SK-N-SH (cell line): ENCODE measurements at regions of chr1 and their contacts with region 1.

Region 1: DNA sequence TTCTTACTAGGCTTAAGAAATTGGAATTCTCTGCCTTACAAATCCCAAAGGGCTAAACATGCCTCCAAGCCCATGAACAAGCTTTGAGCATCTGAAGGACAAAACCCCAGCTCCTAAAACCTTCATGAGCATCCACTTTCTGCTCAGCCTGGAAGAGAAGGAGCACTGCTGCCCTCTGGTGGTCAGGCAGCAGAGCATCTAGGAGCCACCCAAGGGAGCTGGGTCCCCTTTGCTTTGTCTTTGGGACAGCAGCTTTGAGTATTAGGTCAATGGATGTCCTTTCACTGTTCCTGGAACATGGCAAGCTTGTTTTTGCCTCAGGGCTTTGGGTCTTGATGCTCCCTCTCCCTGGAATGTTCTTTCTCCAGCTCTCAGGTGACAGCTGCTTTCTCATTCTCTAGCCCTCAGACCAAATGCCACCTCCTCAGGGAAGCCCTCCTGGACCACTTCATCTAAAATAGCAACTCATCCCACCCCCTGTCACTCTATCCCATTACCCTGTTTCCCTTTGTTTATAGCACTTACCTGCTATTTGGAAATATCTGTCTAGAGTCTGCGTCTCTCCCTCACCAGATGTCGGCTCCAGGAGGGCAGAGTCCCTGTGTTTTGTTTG is 25.7 kb downstream of the RAB7B start:
- DNase-seq: peak; percentile 82
- H3K4me3 ChIP-seq: peak overlapping the region in 1 of 2 experiments; percentile 22; a peak in 1 of 4 replicates
- H3K27ac ChIP-seq: no peak overlapping the region
- H3K4me1 ChIP-seq: peaks cover 0 to 12% of the 10 kb centered on the region in 2 experiments; a peak in 1 of 4 replicates
- H3K27me3 ChIP-seq: no peaks in the 10 kb centered on the region
- CTCF ChIP-seq: peak; percentile 97
- EP300 ChIP-seq: no peak
- RAD21 ChIP-seq: peak; percentile 96

Region 2: DNA sequence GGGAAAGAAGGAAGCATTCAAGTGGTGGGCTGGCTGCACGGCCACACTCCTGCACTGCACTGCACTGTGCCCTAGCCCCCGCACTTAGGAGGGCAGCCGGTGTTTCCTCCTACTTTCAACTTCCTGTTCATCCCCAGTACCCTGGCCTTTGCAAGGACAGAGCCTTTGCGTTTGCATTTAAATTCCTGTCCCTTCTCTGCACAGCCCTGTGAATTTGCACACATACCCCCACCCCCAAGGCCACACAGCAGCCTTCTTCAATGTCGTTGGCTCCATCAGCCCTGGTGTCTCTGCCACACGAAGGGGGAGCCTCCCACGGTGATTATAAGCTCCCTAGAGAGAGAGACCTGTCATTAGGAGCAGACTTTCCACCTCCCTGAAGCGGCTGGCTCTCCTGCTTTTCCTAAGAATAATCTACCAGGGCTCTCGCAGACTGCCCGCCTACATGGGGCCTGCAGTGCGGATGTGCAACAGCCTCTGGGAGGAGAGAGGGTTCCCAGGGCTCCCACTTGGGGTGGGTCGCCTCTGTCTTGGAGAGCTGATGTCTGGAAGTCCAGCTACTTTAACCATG is 284.0 kb before region 1 on chr1:
- CTCF ChIA-PET with region 1: no interaction called
- POLR2A ChIA-PET with region 1: no interaction called
- DNase-seq: no peak
- H3K4me3 ChIP-seq: no peak overlapping the region
- H3K27ac ChIP-seq: no peak overlapping the region
- H3K4me1 ChIP-seq: no peaks in the 10 kb centered on the region
- H3K27me3 ChIP-seq: no peaks in the 10 kb centered on the region
- CTCF ChIP-seq: no peak
- EP300 ChIP-seq: no peak
- RAD21 ChIP-seq: no peak

Region 3: DNA sequence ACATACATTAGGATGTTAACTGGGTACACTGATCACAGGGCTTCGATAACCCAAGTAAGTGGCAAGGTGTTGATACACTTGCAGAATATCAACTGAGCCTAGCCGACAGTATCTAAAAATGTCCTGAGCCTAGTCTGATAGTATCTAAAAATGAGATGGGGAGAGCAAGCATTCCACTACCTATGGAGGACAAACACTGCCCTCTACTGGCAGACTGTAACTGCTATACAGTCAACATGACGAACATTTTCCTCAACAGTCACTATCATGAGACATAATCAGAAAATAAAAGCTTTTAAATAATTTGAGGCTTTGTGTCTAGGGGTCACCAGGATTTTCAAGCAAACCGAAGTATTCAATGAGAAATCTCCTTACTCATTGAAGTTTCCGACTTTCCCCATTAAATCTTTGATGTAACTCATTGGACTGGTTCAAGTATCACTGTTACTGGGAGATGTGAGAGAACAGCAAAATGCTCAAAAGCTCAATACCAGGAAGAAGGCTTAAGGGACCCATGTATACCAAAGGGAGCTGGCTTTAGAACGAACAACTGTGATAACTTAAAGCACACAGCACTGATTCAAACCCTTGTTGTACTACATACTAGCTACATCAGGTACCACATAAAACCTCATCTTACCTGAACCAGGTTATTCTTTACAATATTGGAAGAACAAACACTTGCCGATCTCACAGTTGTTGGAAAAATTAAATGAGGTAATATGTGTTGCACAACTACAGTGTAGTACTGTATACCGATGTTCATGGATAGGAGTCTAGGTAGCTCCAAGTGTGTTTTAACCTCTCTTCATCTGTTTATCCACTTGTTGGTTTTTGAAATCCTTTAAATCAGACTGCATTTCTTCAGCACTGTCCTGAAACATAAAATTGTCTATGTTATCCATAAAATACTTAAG is 266.1 kb before region 1 on chr1:
- CTCF ChIA-PET with region 1: interaction called, 20 read pairs
- POLR2A ChIA-PET with region 1: no interaction called
- DNase-seq: peak; percentile 70
- H3K4me3 ChIP-seq: no peak overlapping the region; a peak in 1 of 4 replicates
- H3K27ac ChIP-seq: peak overlapping the region; percentile 53 to 55
- H3K4me1 ChIP-seq: no peaks in the 10 kb centered on the region; a peak in 1 of 4 replicates
- H3K27me3 ChIP-seq: no peaks in the 10 kb centered on the region
- CTCF ChIP-seq: peak; percentile 96
- EP300 ChIP-seq: no peak
- RAD21 ChIP-seq: peak; percentile 81

Region 4: DNA sequence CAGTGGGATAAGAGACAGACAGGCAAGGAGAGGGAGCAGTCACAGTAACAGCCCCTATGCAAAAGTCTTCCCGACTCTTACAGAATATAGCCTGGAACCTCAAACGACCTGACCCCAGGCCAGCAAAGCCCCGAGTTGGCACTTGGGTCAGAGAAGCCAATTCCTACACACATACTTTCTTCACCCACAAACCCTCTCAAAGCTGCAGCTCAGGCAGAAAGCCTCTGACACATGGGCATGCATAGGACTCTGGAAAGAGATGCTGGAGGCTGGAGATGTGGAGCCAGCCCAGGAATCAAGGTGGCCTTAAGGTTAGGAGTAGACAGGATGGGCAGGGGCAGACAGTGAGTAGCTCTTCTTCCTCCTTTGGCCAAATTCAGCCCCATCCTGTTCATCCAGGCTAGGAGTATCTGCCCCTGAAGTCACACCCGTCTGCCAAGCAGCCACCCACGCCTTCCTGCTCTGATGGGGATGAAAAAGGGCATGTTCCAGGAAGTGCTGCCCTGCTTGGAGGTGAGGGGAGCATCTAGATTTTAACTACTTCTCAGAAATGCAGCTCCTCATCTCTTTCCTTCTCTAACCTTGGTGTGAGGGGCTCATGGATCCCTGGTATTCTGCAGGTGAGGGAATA is 172.3 kb before region 1 on chr1:
- CTCF ChIA-PET with region 1: interaction called, 29 read pairs
- POLR2A ChIA-PET with region 1: no interaction called
- DNase-seq: no peak
- H3K4me3 ChIP-seq: no peak overlapping the region
- H3K27ac ChIP-seq: no peak overlapping the region
- H3K4me1 ChIP-seq: peaks cover 0 to 18% of the 10 kb centered on the region in 2 experiments; a peak in 1 of 4 replicates
- H3K27me3 ChIP-seq: no peaks in the 10 kb centered on the region
- CTCF ChIP-seq: no peak
- EP300 ChIP-seq: no peak
- RAD21 ChIP-seq: no peak

Region 5: GRCh38 chr1:205896320-205896719 is 81.2 kb before region 1 on chr1:
- CTCF ChIA-PET with region 1: interaction called, 10 read pairs
- POLR2A ChIA-PET with region 1: interaction called, 3 read pairs
- DNase-seq: no peak
- H3K4me3 ChIP-seq: no peak overlapping the region
- H3K27ac ChIP-seq: no peak overlapping the region
- H3K4me1 ChIP-seq: peaks cover 0 to 8% of the 10 kb centered on the region in 2 experiments; a peak in 2 of 4 replicates
- H3K27me3 ChIP-seq: no peaks in the 10 kb centered on the region
- CTCF ChIP-seq: no peak
- EP300 ChIP-seq: no peak
- RAD21 ChIP-seq: no peak

Region 6: GRCh38 chr1:205928317-205928716 is 49.2 kb before region 1 on chr1:
- CTCF ChIA-PET with region 1: interaction called, 271 read pairs
- POLR2A ChIA-PET with region 1: no interaction called
- DNase-seq: no peak
- H3K4me3 ChIP-seq: no peak overlapping the region
- H3K27ac ChIP-seq: no peak overlapping the region
- H3K4me1 ChIP-seq: peaks cover 0 to 3% of the 10 kb centered on the region in 2 experiments; a peak in 1 of 4 replicates
- H3K27me3 ChIP-seq: 0 out of 2 replicates have a peak, but pooled peaks cover 7% of the 10 kb centered on the region
- CTCF ChIP-seq: no peak
- EP300 ChIP-seq: no peak
- RAD21 ChIP-seq: no peak

Region 7: DNA sequence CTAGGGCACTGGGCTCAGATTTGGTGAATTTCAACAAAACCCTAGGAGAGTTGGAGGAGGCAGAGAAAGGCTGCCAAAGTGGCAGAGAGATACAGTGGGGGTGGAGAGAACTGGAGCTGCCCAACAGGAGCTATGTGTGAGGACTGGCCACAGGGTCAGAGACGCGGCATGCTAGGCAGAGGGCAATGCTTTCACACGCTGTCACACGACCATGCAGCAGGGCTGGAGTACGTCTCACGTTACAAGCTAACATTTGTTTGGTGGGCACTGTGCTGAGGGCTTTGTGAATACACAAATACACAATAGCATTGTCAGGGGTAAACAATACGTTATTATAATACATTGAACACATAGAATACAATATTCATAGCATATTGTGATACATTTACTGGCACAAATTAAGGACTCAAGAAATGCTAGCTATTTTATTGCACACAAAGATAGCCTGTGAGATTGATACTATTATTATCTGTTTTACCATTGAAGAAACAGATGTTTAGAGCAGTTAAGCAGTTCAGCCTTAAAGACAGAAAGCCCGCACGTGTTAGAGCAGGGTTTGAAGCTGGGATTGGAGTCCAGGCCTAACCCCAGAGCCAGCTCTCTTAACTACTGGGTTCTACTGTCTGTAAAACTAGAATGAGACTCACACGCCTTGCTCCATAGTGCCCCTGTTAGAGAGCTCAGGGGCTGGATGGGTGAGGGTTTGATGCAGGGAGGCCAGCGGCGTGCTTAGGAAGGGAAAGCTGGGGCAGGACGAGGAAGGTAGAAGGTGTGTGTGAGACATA is 21.1 kb after region 1 on chr1:
- CTCF ChIA-PET with region 1: interaction called, 41 read pairs
- POLR2A ChIA-PET with region 1: no interaction called
- DNase-seq: no peak
- H3K4me3 ChIP-seq: no peak overlapping the region
- H3K27ac ChIP-seq: no peak overlapping the region
- H3K4me1 ChIP-seq: peaks cover 0 to 17% of the 10 kb centered on the region in 2 experiments; a peak in 2 of 4 replicates
- H3K27me3 ChIP-seq: no peaks in the 10 kb centered on the region; the same call in 1 of the 2 replicates
- CTCF ChIP-seq: no peak
- EP300 ChIP-seq: no peak
- RAD21 ChIP-seq: no peak

Region 8: GRCh38 chr1:206066479-206067171 is 89.1 kb after region 1 on chr1:
- CTCF ChIA-PET with region 1: no interaction called
- POLR2A ChIA-PET with region 1: no interaction called
- DNase-seq: no peak
- H3K4me3 ChIP-seq: no peak overlapping the region
- H3K27ac ChIP-seq: no peak overlapping the region
- H3K4me1 ChIP-seq: no peaks in the 10 kb centered on the region; a peak in 1 of 4 replicates
- H3K27me3 ChIP-seq: peaks cover 17% of the 10 kb centered on the region
- CTCF ChIP-seq: no peak
- EP300 ChIP-seq: no peak
- RAD21 ChIP-seq: no peak

Region 9: DNA sequence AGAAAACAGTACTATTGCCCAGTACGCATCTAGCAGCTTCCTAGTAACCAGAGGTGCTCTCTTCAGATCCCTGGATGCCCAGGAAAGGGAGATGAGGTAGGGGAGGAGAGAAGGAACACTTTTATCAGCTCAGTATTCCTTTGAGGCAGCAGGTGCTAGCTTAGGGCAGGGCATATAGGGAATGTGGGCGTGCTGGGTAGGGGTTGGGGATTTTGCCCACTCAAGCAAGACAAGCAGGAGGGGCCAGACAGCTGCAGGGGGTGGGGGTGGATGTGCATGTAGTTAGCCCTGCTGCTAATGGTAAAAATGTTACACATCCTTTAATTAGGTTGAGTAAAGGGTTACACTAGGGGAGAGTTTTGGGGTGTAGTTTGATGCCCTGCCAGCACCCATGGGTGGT is 157.7 kb after region 1 on chr1:
- CTCF ChIA-PET with region 1: interaction called, 11 read pairs
- POLR2A ChIA-PET with region 1: no interaction called
- DNase-seq: no peak
- H3K4me3 ChIP-seq: no peak overlapping the region
- H3K27ac ChIP-seq: no peak overlapping the region
- H3K4me1 ChIP-seq: no peaks in the 10 kb centered on the region
- H3K27me3 ChIP-seq: peaks cover 7% of the 10 kb centered on the region; the same call in 1 of the 2 replicates
- CTCF ChIP-seq: no peak
- EP300 ChIP-seq: no peak
- RAD21 ChIP-seq: no peak